Left cardiac atrium (tissue), 4 donors: ENCODE measurements at regions of chr18 and their contacts with region 1.

Region 1: DNA sequence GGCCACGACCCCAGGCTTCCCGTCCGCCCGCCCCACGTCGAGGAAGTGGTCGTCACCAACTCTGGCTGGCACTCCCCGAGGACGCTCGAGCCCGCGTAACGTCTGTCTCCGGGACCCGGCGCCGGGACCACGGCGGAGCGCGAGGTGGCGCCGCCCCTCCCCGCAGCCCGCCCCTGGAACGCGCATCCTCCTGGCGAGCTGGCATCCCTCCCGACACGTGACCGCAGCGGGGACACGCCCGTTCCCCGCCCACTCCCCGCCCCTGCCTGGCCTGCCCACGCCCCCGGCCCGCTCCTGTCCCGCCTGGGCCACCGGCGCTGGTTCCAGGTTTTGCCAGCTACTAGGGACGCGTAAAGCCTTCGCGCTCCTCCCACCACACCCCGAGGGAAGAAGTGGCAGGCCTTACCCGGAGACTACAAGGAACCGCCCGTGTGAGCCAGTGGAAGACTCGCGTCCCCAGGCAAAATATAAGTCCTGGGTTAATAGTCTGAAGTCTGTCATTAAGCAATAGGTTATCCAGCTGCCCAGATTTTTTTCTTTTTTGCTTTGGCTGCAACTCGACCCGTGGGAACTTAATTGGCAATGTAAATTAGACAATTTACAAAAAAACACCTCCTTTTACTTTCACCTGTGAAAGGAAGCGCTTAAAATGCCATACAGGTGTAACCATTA is at the start of gene OSBPL1A:
- DNase-seq: peak; percentile 95
- ATAC-seq: peak; percentile 97 to 98
- total RNA-seq, gene OSBPL1A: 68.8 to 74.4 TPM

Region 2: GRCh38 chr18:24426398-24427294 is 28.8 kb after region 1 on chr18 and contains the start of gene IMPACT:
- intact Hi-C with region 1: loop called in 1 of 2 experiments (anchors 2 kb)
- DNase-seq: peak; percentile 90
- ATAC-seq: peak; percentile 98 to 99
- total RNA-seq, gene IMPACT: 18.9 to 20.8 TPM